MCF 10A (cell line): ENCODE measurements at regions of chr5 and their contacts with region 1.

Region 1: GRCh38 chr5:140346348-140347101 is at the start of gene HBEGF:
- DNase-seq: peak; percentile 94
- H3K4me3 Mint-ChIP-seq: peak within 1 kb of the TSS; percentile 78
- H3K27ac Mint-ChIP-seq: peak within 1 kb of the TSS; percentile 54
- H3K4me1 Mint-ChIP-seq: peaks cover 47% of the 10 kb centered on the region
- H3K27me3 Mint-ChIP-seq: no peaks in the 10 kb centered on the region
- CTCF ChIP-seq: peak; percentile 62
- total RNA-seq, gene HBEGF: 20.6 and 55.7 TPM in 2 replicates

Region 2: GRCh38 chr5:139882961-139883539 is 463.5 kb before region 1 on chr5:
- CTCF ChIA-PET with region 1: no interaction called
- POLR2A ChIA-PET with region 1: no interaction called
- intact Hi-C with region 1: no loop called
- DNase-seq: peak; percentile 46
- H3K4me3 Mint-ChIP-seq: no peak overlapping the region
- H3K27ac Mint-ChIP-seq: no peak overlapping the region
- H3K4me1 Mint-ChIP-seq: no peaks in the 10 kb centered on the region
- H3K27me3 Mint-ChIP-seq: no peaks in the 10 kb centered on the region
- CTCF ChIP-seq: no peak

Region 3: DNA sequence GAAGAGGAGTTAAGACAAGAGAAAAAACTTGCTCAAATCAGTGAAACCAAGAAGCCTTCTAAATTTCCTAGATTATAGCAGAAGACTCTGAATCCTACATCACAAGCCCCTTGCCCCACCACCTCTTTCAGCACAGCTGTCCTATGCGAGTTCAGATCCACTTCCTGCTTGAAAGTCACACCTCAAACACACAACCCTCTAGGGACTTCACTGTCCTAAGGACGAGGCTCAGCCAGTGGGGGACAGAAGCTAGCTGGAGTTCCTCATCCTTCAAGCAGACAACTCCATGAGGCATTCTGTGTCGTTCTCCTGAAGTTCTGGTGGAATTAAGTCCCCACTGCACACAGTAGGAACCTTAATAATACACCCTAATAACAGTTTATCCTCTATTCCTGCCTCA is 347.7 kb before region 1 on chr5:
- CTCF ChIA-PET with region 1: no interaction called
- POLR2A ChIA-PET with region 1: no interaction called
- intact Hi-C with region 1: no loop called
- DNase-seq: no peak
- H3K4me3 Mint-ChIP-seq: no peak overlapping the region
- H3K27ac Mint-ChIP-seq: no peak overlapping the region
- H3K4me1 Mint-ChIP-seq: no peaks in the 10 kb centered on the region
- H3K27me3 Mint-ChIP-seq: peaks cover 50% of the 10 kb centered on the region
- CTCF ChIP-seq: no peak

Region 4: GRCh38 chr5:140174465-140175366 is 171.8 kb before region 1 on chr5 and contains the start of gene CYSTM1:
- CTCF ChIA-PET with region 1: interaction called, 15 read pairs
- POLR2A ChIA-PET with region 1: interaction called, 13 read pairs
- intact Hi-C with region 1: loop called (anchors 5 kb)
- DNase-seq: peak; percentile 98
- H3K4me3 Mint-ChIP-seq: peak within 1 kb of the TSS; percentile 89
- H3K27ac Mint-ChIP-seq: peak within 1 kb of the TSS; percentile 98
- H3K4me1 Mint-ChIP-seq: peaks cover 11% of the 10 kb centered on the region
- H3K27me3 Mint-ChIP-seq: no peaks in the 10 kb centered on the region
- CTCF ChIP-seq: no peak
- total RNA-seq, gene CYSTM1: 59.4 and 105 TPM in 2 replicates

Region 5: GRCh38 chr5:140251527-140251973 is 95.0 kb before region 1 on chr5:
- CTCF ChIA-PET with region 1: interaction called, 1,450 read pairs
- POLR2A ChIA-PET with region 1: interaction called, 136 read pairs
- intact Hi-C with region 1: no loop called
- DNase-seq: peak; percentile 70
- H3K4me3 Mint-ChIP-seq: no peak overlapping the region
- H3K27ac Mint-ChIP-seq: peak overlapping the region; percentile 80
- H3K4me1 Mint-ChIP-seq: peaks cover 27% of the 10 kb centered on the region
- H3K27me3 Mint-ChIP-seq: no peaks in the 10 kb centered on the region
- CTCF ChIP-seq: no peak

Region 6: DNA sequence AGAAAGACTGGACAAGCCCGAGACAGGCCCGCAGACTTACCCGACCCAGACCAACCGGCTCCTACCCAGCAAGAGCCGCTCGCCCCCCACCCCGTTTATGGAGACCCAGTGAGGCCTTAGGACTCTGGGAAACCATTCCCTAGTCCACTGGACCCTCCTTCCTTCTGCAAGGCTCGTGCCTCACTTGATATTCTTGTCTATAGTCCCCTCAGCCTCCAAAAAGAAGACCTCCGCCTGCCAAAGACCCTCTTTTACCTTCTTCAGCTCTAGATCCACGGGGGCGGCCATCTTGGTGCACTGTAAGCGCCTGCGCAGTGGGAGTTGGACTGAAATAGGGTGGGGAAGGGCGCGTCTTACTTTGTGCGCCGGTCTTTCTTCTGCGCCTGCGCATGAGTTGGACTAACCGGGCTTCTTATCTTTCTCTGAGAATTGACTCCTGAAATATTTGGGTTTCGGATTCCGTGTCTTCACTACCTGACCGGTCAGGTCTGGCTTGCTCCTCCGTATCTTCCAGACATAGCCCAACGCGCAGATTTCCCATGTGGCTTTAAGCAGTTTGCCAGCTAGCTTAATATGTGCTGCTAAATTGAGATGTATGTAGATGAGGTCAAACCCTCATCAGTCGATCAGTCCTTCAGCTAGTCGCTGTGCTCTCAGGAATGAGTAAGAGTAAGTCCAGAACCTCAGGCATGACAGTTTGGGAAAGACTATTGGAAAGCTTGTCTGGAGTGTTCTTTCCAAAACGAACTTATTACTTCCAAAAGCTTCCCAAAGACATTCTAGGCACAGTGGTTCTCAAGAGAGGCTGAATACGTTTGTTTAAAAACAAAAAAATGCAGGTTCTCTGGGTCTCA is 43.5 kb before region 1 on chr5 and contains the start of gene PFDN1:
- CTCF ChIA-PET with region 1: interaction called, 52 read pairs
- POLR2A ChIA-PET with region 1: interaction called, 98 read pairs
- intact Hi-C with region 1: loop called (anchors 2 kb)
- DNase-seq: peak; percentile 99
- H3K4me3 Mint-ChIP-seq: peak within 1 kb of the TSS; percentile 100
- H3K27ac Mint-ChIP-seq: peak within 1 kb of the TSS; percentile 100
- H3K4me1 Mint-ChIP-seq: peaks cover 30% of the 10 kb centered on the region
- H3K27me3 Mint-ChIP-seq: no peaks in the 10 kb centered on the region
- CTCF ChIP-seq: no peak
- total RNA-seq, gene PFDN1: 94.7 and 102 TPM in 2 replicates

Region 7: GRCh38 chr5:140336388-140336787 is 10.1 kb before region 1 on chr5:
- CTCF ChIA-PET with region 1: interaction called, 37 read pairs
- POLR2A ChIA-PET with region 1: interaction called, 18 read pairs
- intact Hi-C with region 1: no loop called
- DNase-seq: no peak
- H3K4me3 Mint-ChIP-seq: no peak overlapping the region
- H3K27ac Mint-ChIP-seq: no peak overlapping the region
- H3K4me1 Mint-ChIP-seq: peaks cover 16% of the 10 kb centered on the region
- H3K27me3 Mint-ChIP-seq: no peaks in the 10 kb centered on the region
- CTCF ChIP-seq: no peak

Region 8: DNA sequence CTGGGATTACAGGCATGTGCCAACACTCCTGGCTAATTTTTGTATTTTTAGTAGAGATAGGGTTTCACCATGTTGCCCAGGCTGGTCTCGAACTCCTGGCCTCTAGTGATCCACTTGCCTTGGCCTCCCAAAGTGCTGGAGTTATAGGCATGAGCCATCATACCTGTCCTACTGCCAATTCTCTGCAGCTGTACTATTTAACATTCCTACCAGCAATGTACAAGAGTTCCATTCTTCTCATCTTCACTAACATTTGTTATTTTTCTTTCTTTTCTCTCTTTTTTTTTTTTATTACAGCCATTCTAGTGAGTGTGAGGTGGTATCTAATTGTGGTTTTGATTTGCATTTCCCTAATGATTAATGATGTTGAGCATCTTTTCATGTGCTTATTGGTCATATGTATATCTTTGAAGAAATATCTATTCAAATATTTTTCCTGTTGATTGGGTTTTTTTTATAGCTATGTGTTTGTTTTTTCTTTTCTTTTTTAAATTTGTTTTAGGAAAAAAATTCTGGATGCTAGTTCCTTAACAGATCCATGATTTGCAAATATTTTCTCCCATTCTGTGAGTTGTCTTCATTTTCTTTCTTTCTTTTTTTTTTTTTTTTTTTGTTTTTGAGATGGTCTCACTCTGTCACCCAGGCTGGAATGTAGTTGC is 72.5 kb after region 1 on chr5:
- CTCF ChIA-PET with region 1: no interaction called
- POLR2A ChIA-PET with region 1: no interaction called
- intact Hi-C with region 1: no loop called
- DNase-seq: no peak
- H3K4me3 Mint-ChIP-seq: no peak overlapping the region
- H3K27ac Mint-ChIP-seq: no peak overlapping the region
- H3K4me1 Mint-ChIP-seq: peaks cover 37% of the 10 kb centered on the region
- H3K27me3 Mint-ChIP-seq: no peaks in the 10 kb centered on the region
- CTCF ChIP-seq: no peak

Region 9: DNA sequence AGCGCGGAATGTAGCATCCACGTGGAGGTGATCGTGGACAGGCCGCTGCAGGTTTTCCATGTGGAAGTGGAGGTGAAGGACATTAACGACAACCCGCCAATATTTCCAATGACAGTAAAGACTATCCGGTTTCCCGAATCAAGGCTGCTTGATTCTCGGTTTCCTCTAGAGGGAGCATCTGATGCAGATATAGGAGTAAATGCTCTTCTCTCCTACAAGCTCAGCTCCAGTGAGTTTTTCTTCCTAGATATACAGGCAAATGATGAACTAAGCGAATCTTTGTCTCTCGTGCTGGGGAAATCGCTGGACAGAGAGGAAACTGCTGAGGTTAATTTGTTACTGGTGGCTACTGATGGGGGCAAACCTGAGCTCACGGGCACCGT is 448.7 kb after region 1 on chr5:
- CTCF ChIA-PET with region 1: no interaction called
- POLR2A ChIA-PET with region 1: no interaction called
- intact Hi-C with region 1: no loop called
- DNase-seq: no peak
- H3K4me3 Mint-ChIP-seq: no peak overlapping the region
- H3K27ac Mint-ChIP-seq: no peak overlapping the region
- H3K4me1 Mint-ChIP-seq: no peaks in the 10 kb centered on the region
- H3K27me3 Mint-ChIP-seq: no peaks in the 10 kb centered on the region
- CTCF ChIP-seq: no peak